ENCODE measurements at regions of chr11 and their contacts with region 1.

Region 1: DNA sequence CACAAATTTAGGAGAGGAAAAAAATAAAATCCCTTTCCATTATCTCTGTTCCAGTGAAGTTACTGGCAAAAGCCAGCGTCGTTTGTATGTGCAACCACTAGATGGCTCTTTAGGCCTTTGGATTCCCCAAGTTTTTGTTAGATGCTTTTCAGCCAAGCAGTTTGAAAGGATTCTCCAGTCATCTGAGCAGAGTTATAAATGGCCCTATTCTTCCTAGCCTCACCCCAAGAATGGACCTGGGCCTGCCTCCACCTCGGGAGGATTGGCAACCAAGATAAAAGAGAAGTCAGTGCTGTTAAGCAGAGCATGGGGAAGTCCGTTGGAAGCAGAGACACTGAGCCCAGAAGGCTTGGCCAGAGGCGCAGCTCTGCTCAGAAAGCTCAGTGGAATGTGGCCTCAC is 15.4 kb downstream of the FAM181B start:
- DNase-seq: peak in 8 of 10 donors; percentile 28 to 61 (median 54)
- H3K4me3 ChIP-seq: peak overlapping the region in 40 of 59 donors; percentile 0 to 47 (median 22)
- H3K27ac ChIP-seq: peak overlapping the region; percentile 49 to 97 (median 91)
- H3K27me3 ChIP-seq: no peaks in the 10 kb centered on the region
- CTCF ChIP-seq: peak; percentile 76 to 98 (median 88)

Region 2: DNA sequence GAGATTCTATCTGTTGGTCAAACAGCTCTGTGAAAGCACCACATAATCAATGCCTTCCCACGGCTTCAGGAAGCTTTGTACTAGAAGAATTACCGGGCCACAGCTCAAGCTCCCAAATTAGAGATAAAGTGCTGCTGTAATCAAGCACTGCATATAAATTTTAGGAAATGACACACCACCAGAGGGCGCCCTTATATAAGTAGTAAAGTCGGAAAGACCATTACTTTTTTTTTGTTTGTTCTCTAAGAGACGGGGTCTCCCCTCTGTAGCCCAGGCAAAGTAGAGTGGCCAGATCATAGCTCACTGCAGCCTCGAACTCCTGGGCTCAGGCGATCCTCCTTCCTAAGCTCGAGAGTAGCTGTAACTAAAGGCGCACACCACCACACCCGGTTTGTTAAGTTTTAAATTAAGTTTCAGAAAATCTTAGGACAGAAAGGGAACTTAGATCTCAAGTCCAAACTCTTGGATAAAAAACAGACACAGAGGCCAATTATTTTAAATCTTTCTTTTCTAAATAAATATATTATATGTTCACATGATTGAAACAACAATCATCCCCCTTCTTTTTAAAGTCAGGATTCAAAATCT is 149.3 kb after region 1 on chr11:
- intact Hi-C with region 1: loop called (anchors 1 to 5 kb)
- DNase-seq: peak in 5 of 10 donors; percentile 49 to 88 (median 69)
- H3K4me3 ChIP-seq: peak overlapping the region in 30 of 59 donors; percentile 2 to 46 (median 28)
- H3K27ac ChIP-seq: peak overlapping the region in 32 of 59 donors; percentile 2 to 68 (median 38)
- H3K27me3 ChIP-seq: no peaks in the 10 kb centered on the region
- CTCF ChIP-seq: peak; percentile 71 to 93 (median 84)

Region 3: GRCh38 chr11:83156150-83156995 is 438.1 kb after region 1 on chr11:
- intact Hi-C with region 1: loop called in 1 of 2 experiments (anchors 10 kb)
- DNase-seq: peak in 5 of 10 donors; percentile 96 to 100 (median 99)
- H3K4me3 ChIP-seq: peak overlapping the region; percentile 48 to 100 (median 94)
- H3K27ac ChIP-seq: peak overlapping the region; percentile 35 to 100 (median 96)
- H3K27me3 ChIP-seq: no peaks in the 10 kb centered on the region
- CTCF ChIP-seq: peak in 11 of 56 donors; percentile 3 to 26 (median 11)

Region 4: DNA sequence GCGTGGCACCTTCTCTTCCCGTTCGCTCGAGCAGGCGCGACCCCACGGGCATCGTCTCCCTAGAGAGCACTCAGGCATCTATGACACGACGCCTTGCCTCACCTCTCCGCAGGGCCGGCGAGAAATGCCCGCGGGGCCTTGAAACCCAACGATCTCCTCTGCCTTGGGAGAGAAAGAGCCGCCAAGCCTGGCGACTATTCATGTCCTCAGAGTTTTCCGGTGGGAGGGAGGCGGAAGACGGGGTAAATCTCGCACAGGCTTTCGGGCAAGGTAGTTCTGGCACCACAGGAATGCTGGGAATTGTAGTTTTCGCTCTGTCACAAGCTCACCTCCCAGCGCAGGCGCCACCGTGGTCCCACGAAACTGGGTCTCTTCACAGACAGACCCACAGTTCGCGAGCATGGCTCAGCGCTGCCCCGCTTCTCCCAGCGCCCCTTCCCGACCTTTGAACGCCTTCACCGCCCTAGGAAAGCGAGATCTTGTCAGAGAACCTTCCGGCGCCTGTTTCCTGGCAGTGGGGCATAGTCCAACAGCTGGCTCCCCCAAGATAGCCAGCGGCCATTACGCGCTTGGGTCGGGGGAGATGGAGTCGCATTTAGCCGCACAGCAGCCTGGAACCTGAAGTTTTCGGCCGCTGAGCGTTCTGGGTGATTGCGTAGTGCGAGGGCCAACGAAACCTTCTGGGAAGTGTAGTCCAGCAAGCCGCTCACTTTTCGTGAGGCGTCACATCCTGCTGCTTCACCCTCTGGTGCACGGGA is 567.6 kb after region 1 on chr11 and contains the start of gene CCDC90B:
- intact Hi-C with region 1: loop called in 1 of 2 experiments (anchors 10 kb)
- DNase-seq: peak; percentile 94 to 99 (median 97)
- H3K4me3 ChIP-seq: peak within 1 kb of the TSS; percentile 66 to 100 (median 93)
- H3K27ac ChIP-seq: peak within 1 kb of the TSS; percentile 89 to 100 (median 99)
- H3K27me3 ChIP-seq: no peaks in the 10 kb centered on the region
- CTCF ChIP-seq: peak in 46 of 56 donors; percentile 22 to 78 (median 58)
- total RNA-seq, gene CCDC90B: 25.8 to 63.1 (median 35.8) TPM

Measured in dorsolateral prefrontal cortex (tissue), 120 donors.